Activated CD4-positive, alpha-beta T cell treated with anti-CD3 and anti-CD28 coated beads, Interleukin-2, amount 10 ng/mL, durations not matched to agents 7 days and 5 days (primary cell): ENCODE measurements at regions of chr3 and their contacts with region 1.

Region 1: GRCh38 chr3:64011685-64012084 is 11.6 kb downstream of the PSMD6 start:
- DNase-seq: no peak
- H3K4me3 Mint-ChIP-seq: no peak overlapping the region
- H3K27ac Mint-ChIP-seq: no peak overlapping the region
- H3K4me1 Mint-ChIP-seq: peaks cover 31% of the 10 kb centered on the region
- H3K27me3 Mint-ChIP-seq: no peaks in the 10 kb centered on the region

Region 2: DNA sequence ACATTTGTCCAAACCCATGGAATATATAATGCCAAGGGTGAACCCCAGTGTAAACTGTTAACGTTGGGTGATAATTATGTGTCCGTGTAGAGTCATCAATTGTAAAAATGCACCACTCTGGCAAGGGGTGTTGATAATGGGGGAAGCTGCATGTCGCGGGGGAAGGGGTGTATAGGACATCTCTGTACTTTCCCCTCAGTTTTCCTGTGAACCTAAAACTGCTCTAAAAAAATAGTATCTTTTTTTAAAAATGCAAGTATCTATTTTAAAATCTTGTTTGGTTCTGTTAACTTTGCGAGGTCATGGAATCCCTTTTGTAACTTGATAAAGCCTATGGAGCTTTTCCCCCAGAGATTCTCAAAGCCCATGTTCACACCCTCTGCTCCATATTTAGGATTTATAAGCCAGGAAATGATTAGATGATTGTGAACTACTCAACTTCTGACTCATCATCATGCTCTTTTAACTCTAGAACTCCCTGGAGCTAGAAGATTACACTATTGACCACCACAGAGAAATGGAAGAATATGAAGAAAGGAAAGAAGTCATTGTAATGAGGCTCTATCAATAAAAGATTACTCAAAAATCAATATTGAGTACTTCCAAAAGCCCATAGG is 248.6 kb before region 1 on chr3:
- CTCF ChIA-PET with region 1: no interaction called
- POLR2A ChIA-PET with region 1: no interaction called
- DNase-seq: no peak
- H3K4me3 Mint-ChIP-seq: no peak overlapping the region
- H3K27ac Mint-ChIP-seq: no peak overlapping the region
- H3K4me1 Mint-ChIP-seq: no peaks in the 10 kb centered on the region
- H3K27me3 Mint-ChIP-seq: no peaks in the 10 kb centered on the region

Region 3: GRCh38 chr3:64023187-64023848 is 11.6 kb after region 1 on chr3 and contains the start of gene PSMD6:
- CTCF ChIA-PET with region 1: interaction called, 25 read pairs
- POLR2A ChIA-PET with region 1: no interaction called
- DNase-seq: peak; percentile 90
- H3K4me3 Mint-ChIP-seq: peak within 1 kb of the TSS; percentile 84
- H3K27ac Mint-ChIP-seq: peak within 1 kb of the TSS; percentile 92
- H3K4me1 Mint-ChIP-seq: peaks cover 32% of the 10 kb centered on the region
- H3K27me3 Mint-ChIP-seq: peaks cover 20% of the 10 kb centered on the region
- total RNA-seq, gene PSMD6: 73.4 to 75.0 TPM

Region 4: GRCh38 chr3:64039981-64040733 is 28.5 kb after region 1 on chr3:
- CTCF ChIA-PET with region 1: no interaction called
- POLR2A ChIA-PET with region 1: no interaction called
- DNase-seq: no peak
- H3K4me3 Mint-ChIP-seq: no peak overlapping the region
- H3K27ac Mint-ChIP-seq: no peak overlapping the region
- H3K4me1 Mint-ChIP-seq: no peaks in the 10 kb centered on the region
- H3K27me3 Mint-ChIP-seq: peaks cover 31% of the 10 kb centered on the region